ENCODE measurements at regions of chr17 and their contacts with region 1.

Region 1: DNA sequence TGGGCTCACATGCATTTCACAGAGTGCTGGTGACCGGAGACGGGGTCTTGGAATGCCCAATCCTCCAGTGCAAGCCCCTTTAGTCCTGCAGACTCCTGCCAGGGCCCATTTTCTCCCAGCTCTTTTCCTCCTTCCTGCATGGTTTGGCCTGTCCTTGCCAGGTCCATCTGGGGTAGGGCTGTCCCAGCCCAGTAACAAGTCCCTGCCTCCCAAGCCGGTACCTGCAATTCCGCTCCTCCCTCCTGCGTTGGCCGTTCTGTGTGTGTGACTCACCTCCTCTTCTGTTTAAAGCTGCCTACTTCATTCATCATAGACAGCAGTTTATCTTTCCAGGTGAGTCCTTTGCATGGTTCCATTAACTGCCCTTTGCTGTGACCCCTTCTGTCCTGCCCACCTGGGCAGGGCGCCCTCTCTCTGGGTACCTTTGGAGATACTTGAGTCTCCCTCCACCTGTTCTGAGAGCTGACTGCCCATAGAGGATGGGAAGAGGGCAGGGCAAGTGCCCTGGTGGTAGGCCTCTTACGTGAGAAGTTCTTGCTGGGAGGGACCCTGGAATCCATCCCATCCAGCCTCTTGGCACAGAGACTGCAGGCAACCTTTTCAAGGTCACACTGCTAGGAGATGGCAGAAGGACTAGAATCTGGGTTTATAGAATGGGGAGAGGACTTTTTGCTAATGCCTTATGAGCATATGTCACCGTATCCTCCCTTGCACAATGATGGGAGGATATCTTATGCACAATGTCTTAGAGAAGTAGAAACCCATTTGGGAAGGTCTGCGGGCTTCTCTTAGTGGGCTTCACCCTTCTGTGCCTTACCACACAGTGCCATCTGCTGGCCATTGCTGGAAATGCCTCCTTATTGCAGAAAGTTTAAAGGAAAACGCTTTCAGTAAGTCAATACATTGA is 29.7 kb upstream of the LGALS9 start:
- DNase-seq: no peak
- H3K4me3 ChIP-seq: no peak overlapping the region
- CTCF ChIP-seq: peak; percentile 85

Region 2: DNA sequence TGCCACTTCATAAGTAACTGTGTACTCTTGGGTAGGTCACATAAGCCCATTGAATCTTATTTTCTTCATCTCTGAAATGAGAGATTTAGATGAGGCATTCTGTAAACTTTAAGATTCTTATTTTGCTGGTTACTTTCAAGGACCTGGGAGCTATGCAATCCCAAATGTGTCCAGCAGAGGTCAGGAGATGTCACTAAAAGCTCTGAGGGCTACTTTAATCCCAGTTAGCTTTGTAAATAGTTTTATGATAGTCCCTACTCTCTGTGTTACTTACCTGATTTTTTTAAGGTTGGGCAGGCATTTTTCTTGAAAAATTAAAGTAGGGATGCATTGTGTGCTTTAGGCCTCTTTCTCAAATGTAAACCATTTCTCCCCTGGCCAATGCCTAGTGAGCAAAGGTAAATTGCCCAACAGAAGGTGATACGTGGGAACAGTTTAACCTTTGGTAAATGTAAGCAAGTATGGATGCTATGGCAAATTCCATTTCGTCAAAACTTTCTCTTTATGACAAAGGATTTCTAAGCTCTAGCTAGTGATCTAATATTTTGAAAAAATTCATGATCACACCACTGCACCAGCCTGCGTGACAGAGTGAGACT is 364.5 kb before region 1 on chr17:
- CTCF ChIA-PET with region 1: interaction called, 367 read pairs
- POLR2A ChIA-PET with region 1: no interaction called
- DNase-seq: peak; percentile 16
- H3K4me3 ChIP-seq: no peak overlapping the region
- CTCF ChIP-seq: peak; percentile 62

Region 3: DNA sequence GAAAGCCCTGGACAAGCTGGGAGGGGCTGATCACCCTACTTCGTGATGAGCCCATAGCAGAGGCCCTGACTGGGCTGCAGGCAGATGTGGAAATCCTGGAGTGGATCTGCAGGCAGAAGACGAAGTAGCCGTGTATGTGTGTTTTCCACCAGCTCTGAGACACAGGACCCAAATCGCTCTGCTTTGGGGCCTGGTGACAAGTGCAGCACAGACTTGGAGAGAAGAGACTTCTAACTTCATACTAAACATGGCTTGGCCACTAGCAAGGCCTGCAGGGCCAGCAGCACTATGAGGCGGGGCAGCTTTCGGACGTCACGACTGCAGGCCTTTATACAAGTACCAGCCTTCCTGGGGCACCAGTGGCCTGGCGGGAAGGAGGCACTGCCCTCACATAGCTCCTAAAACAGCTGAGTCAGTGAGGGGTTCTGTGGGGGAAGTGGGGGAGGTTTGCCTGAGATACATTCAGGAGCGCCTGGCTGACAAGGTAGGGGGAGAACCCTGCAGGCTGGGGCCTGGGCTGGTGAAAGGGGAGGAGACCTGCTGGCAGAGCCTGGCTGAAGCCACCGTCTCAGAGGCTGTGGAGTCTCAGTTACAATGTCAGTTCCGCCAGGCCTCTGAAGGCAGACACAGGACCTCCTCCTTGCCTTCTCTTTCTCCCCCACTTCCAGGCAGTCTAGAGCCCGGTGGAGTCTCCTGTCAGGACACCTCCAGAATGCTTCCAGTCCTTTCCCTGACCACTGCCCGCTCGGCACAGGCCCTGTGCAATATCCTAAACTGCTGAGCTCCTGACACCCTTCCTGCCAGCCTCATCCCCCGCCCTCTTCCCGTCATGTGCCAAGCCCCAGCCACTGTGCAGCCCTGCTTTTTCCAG is 234.0 kb before region 1 on chr17:
- CTCF ChIA-PET with region 1: interaction called, 634 read pairs
- POLR2A ChIA-PET with region 1: no interaction called
- DNase-seq: no peak
- H3K4me3 ChIP-seq: no peak overlapping the region
- CTCF ChIP-seq: no peak

Region 4: DNA sequence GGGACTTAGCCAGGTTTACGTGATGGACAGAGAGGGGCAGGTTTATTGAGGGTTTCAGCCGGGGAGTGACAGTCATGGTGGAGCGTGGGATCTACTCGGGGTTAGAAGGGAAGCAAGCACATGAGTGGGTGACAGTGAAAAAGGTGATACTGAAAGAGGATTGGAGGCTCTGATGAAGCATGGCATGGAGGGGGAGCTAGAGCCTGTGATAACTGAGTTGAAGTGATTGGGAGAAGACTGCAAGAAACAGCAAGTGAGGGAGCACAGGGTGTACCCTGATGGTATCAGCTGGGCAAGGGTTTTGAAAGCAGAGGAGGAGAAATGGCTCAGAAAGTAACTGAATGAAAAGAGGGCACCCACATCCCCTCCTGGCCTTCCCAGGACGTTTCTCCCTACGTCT is 151.8 kb before region 1 on chr17:
- CTCF ChIA-PET with region 1: interaction called, 146 read pairs
- POLR2A ChIA-PET with region 1: no interaction called
- DNase-seq: no peak
- H3K4me3 ChIP-seq: no peak overlapping the region
- CTCF ChIP-seq: no peak

Region 5: DNA sequence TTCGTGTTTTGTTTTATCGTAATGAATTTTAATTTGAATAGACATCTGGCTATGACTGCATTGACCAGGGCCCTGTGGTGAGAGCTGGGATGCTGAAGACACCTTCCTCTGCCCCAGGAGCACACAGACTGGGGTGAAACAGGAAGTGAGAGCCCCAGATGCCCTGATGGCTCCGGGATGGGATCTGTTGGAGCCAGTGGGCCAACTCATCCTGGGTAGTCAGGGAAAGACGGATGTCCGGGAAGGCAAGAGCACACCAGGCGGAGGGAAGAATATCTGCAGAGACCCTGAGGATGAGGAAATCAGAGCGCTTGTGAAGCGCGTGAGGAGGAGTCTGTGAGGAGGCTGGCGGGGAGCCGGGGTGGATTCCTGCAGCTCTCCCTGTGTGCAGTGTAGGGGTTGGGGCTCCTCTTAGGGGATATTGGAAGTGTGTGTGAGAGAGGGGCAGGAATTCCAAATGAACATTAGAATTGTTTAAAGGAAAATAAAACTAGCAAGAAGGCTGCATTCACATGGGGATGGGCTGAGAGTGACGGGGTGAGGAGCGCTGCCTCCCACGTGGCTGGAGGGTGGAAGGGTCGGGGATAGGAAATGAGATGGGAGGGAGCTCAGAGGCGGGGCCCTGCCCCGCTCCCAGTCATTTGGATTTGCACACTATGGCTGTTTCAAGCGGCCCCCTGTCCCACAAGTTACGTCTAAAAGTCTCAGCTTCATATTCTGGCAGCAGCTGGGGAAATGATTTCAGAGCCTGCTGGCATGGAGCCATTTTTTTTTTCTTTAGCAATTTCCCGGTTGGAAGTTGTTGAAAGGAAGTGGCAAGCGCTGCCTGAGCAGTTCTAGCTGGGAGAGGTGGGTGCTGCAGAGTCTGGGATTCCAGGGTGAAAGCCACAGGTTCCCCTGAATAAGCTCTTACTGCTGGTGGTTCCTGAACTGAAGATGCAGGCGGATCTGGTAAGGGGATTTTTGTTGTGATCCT is 41.5 kb before region 1 on chr17:
- CTCF ChIA-PET with region 1: interaction called, 12 read pairs
- POLR2A ChIA-PET with region 1: no interaction called
- DNase-seq: no peak
- H3K4me3 ChIP-seq: peak overlapping the region; percentile 12; the same call in 1 of the 2 replicates
- CTCF ChIP-seq: peak; percentile 21

Region 6: GRCh38 chr17:27630607-27631410 is 29.5 kb after region 1 on chr17 and contains the start of gene LGALS9:
- CTCF ChIA-PET with region 1: interaction called, 12 read pairs
- POLR2A ChIA-PET with region 1: no interaction called
- DNase-seq: no peak
- H3K4me3 ChIP-seq: no peak within 1 kb of the TSS
- CTCF ChIP-seq: no peak